ENCODE measurements at regions of chr12 and their contacts with region 1.

Region 1: DNA sequence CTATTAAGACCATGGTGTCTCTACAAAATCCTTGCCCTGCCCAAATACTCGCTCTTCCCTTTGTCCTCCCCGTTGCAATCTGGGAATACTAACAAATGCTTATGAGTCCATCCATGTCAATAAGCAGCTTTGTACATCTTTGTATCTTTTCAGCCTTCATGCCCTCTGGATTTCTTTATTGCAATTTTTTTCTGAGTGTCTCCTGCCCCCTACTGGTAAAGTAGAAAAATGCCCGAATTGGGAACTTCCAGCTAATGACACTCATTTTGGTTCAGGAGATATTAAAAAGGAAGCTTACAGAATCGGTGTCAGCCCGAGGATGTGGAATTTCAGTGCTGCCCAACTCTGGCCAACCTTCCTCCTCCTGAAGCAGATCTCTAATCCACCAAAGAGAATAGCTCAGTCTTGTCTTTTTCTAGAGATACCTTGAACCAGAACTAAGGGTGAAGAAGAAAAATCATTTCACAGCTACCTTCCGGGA is 46.0 kb downstream of the SH2B3 start:
- DNase-seq: peak; percentile 62
- H3K4me3 ChIP-seq: peak overlapping the region in 1 of 2 experiments; percentile 18; a peak in 1 of 4 replicates
- H3K27ac ChIP-seq: peak overlapping the region in 1 of 2 experiments; percentile 38; a peak in 1 of 4 replicates
- H3K4me1 ChIP-seq: peaks cover 6 to 51% of the 10 kb centered on the region in 2 experiments
- H3K27me3 ChIP-seq: no peaks in the 10 kb centered on the region
- CTCF ChIP-seq: peak; percentile 91
- EP300 ChIP-seq: no peak
- RAD21 ChIP-seq: peak; percentile 87

Region 2: GRCh38 chr12:111359231-111359913 is 92.3 kb before region 1 on chr12:
- CTCF ChIA-PET with region 1: no interaction called
- POLR2A ChIA-PET with region 1: no interaction called
- DNase-seq: no peak
- H3K4me3 ChIP-seq: no peak overlapping the region
- H3K27ac ChIP-seq: no peak overlapping the region
- H3K4me1 ChIP-seq: no peaks in the 10 kb centered on the region; a peak in 1 of 4 replicates
- H3K27me3 ChIP-seq: no peaks in the 10 kb centered on the region
- CTCF ChIP-seq: no peak
- EP300 ChIP-seq: no peak
- RAD21 ChIP-seq: no peak

Region 3: GRCh38 chr12:111389635-111390034 is 62.1 kb before region 1 on chr12:
- CTCF ChIA-PET with region 1: interaction called, 618 read pairs
- POLR2A ChIA-PET with region 1: no interaction called
- DNase-seq: no peak
- H3K4me3 ChIP-seq: no peak overlapping the region
- H3K27ac ChIP-seq: no peak overlapping the region
- H3K4me1 ChIP-seq: peaks cover 0 to 7% of the 10 kb centered on the region in 2 experiments; a peak in 1 of 4 replicates
- H3K27me3 ChIP-seq: no peaks in the 10 kb centered on the region
- CTCF ChIP-seq: no peak
- EP300 ChIP-seq: no peak
- RAD21 ChIP-seq: no peak

Region 4: DNA sequence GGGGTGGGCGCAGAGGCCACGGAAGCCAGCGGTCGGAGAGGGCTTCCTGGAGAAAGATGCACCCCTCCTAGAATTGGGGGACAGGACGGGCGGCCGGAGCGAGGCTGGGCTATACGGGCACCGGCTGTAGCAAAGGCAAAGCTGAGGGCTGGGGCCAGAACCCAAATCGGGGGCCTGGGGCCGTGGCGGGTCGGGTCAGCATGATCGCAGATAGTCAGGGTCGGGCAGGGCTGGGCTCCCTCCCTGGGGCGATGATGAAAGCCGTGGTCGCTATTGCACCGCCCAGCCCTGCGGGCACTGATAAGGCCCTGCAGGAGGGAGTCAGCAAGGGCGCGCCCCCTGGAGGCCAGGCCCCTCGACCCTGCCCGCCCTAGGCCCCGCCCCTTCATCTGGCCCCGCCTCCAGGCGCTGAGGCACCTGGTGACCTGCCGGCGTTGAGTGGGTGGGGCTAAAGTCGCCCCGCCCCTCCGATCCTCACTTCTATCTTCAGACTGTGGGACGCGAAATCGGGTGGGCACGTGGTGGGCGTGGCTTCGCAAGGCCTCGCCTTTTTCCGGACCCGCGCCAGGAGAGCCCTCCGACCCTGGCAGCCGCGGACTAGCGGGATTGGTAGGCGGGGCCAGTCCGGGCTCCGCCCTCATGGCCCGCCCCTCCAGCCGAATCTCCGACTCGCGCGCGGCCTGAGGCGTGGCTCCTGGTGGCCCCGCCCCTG is 46.4 kb before region 1 on chr12:
- CTCF ChIA-PET with region 1: interaction called, 618 read pairs
- POLR2A ChIA-PET with region 1: no interaction called
- DNase-seq: peak; percentile 99
- H3K4me3 ChIP-seq: peak overlapping the region; percentile 92
- H3K27ac ChIP-seq: no peak overlapping the region; a peak in 1 of 4 replicates
- H3K4me1 ChIP-seq: peaks cover 32 to 37% of the 10 kb centered on the region in 2 experiments; a peak in 3 of 4 replicates
- H3K27me3 ChIP-seq: no peaks in the 10 kb centered on the region
- CTCF ChIP-seq: peak; percentile 58
- EP300 ChIP-seq: no peak
- RAD21 ChIP-seq: no peak

Region 5: DNA sequence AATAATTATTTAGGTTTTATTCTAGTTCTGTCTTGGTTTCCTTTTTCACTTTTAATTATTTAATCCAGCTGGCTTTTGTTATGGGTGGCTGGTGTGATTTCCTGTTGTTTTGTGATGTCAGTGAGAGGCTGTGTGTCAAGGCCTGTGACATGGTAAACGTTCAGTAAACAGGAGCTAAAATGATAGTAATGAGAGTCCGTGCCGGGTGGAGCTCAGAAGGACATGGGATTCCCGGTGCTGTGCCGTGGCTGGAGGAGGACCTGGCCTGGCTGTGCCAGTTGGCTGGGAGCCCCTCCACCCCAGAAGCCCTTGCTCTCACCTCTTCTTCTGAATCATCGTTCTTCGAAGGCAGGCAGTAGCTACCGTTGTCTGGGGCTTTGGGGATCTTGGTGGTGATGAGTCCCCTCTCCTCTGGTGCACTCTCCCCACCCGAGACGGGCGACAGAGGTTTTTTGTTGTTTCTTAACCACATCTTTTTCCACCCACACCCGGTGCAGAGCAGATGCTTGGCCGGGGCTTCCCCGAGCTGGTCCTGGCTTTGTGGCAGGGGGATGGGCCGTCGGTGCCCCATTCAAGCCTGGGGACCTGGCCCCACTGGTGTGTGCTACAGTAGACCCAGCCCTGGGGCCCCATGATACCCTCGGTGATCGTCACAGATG is 16.9 kb before region 1 on chr12:
- CTCF ChIA-PET with region 1: interaction called, 33 read pairs
- POLR2A ChIA-PET with region 1: interaction called, 3 read pairs
- DNase-seq: no peak
- H3K4me3 ChIP-seq: no peak overlapping the region
- H3K27ac ChIP-seq: peak overlapping the region; percentile 40 to 50; a peak in 3 of 4 replicates
- H3K4me1 ChIP-seq: peaks cover 30 to 61% of the 10 kb centered on the region in 2 experiments
- H3K27me3 ChIP-seq: no peaks in the 10 kb centered on the region
- CTCF ChIP-seq: no peak
- EP300 ChIP-seq: no peak
- RAD21 ChIP-seq: no peak

Region 6: GRCh38 chr12:111462210-111462769 is 10.6 kb after region 1 on chr12:
- CTCF ChIA-PET with region 1: interaction called, 40 read pairs
- POLR2A ChIA-PET with region 1: no interaction called
- DNase-seq: no peak
- H3K4me3 ChIP-seq: no peak overlapping the region; a peak in 1 of 4 replicates
- H3K27ac ChIP-seq: peak overlapping the region; percentile 24 to 95; a peak in 3 of 4 replicates
- H3K4me1 ChIP-seq: peaks cover 0 to 13% of the 10 kb centered on the region in 2 experiments; a peak in 2 of 4 replicates
- H3K27me3 ChIP-seq: no peaks in the 10 kb centered on the region
- CTCF ChIP-seq: no peak
- EP300 ChIP-seq: no peak; a peak in 1 of 4 replicates
- RAD21 ChIP-seq: no peak

Region 7: DNA sequence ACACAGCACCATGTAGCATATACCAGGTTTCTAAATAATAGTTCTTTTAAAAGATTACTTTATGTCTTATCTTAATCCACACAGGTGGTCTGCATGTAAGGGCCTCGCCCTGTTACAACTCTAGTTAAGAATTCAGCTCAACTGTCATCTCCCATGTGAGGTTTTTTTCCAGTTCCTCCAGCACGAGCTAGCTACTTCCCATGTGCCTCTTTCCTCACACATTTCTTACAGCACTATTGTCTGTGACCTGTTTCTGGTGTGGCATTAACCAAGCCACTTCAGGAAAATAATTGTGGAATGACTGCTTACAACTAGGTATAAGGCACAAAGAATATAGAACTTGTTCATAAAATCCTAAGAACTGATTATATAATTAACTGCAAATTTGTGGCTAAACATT is 19.5 kb after region 1 on chr12:
- CTCF ChIA-PET with region 1: interaction called, 21 read pairs
- POLR2A ChIA-PET with region 1: no interaction called
- DNase-seq: no peak
- H3K4me3 ChIP-seq: no peak overlapping the region
- H3K27ac ChIP-seq: peak overlapping the region in 1 of 2 experiments; percentile 76; a peak in 1 of 4 replicates
- H3K4me1 ChIP-seq: peaks cover 0 to 6% of the 10 kb centered on the region in 2 experiments; a peak in 1 of 4 replicates
- H3K27me3 ChIP-seq: no peaks in the 10 kb centered on the region
- CTCF ChIP-seq: no peak
- EP300 ChIP-seq: no peak
- RAD21 ChIP-seq: no peak

Region 8: GRCh38 chr12:111482462-111482861 is 30.8 kb after region 1 on chr12:
- CTCF ChIA-PET with region 1: interaction called, 12 read pairs
- POLR2A ChIA-PET with region 1: no interaction called
- DNase-seq: no peak
- H3K4me3 ChIP-seq: no peak overlapping the region
- H3K27ac ChIP-seq: no peak overlapping the region
- H3K4me1 ChIP-seq: no peaks in the 10 kb centered on the region
- H3K27me3 ChIP-seq: no peaks in the 10 kb centered on the region
- CTCF ChIP-seq: peak; percentile 46
- EP300 ChIP-seq: no peak
- RAD21 ChIP-seq: no peak

Measured in SK-N-SH (cell line).